ENCODE measurements at regions of chr10 and their contacts with region 1.

Region 1: DNA sequence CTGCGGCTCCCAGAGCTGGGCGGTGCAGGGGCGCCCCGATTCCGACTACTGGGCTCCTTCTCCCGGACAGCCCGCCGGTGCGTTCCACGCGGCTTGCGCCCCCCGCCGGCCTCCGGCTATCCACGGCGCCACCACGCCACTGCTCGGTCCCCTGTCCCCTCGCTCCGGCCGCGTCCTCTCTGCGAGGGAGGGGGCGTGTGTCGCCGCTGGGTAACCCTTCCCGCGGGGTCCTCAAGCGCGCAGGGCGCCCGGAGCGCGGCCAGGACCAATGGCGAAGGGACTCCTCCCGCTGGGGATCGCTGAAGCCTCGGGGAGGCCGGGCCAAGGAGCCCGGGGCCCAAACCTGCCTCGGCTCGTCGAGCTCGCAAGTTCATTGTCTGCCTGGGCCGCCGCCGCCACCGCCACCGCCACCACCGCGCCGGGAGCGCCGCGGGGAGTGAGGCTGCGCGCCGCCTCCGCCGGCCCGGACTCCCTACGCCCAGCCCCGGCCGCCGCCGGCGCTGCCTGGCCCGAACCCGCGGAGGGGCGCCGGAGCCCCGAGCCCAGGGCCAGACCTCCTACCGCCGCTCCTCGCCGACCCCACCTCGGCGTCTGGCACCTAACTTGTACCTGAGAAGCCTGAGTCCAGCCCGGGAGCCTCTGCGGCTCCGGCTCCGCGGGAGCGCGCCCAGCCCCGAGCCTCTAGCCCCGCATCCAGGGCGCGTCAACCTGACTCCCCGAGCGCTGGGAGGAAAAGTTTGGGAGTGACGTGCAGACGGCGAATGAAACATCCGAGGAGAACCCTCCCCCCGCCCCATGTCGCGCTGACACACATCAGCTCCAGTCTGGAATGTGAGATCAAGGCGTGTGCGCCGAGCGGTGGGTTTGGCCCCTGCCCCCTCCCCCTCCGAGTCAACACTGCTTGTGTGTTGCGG is at the start of gene CHST15:
- DNase-seq: peak; percentile 35 to 47
- ATAC-seq: peak; percentile 26 to 55 (median 46)
- H3K4me3 ChIP-seq: peak within 1 kb of the TSS; percentile 33 to 81 (median 68)
- H3K27ac ChIP-seq: peak within 1 kb of the TSS; percentile 56 to 97 (median 83)
- H3K4me1 ChIP-seq: peaks cover 0 to 52% (median 30%) of the 10 kb centered on the region in 9 donors
- H3K27me3 ChIP-seq: peaks cover 0 to 59% (median 35%) of the 10 kb centered on the region in 7 donors
- CTCF ChIP-seq: peak in 3 of 9 donors; percentile 27 to 36 (median 30)
- total RNA-seq, gene CHST15: 3.8 to 16.7 (median 5.1) TPM

Region 2: GRCh38 chr10:124035928-124036558 is 57.1 kb before region 1 on chr10:
- intact Hi-C with region 1: no loop called
- DNase-seq: peak in 1 of 2 donors; percentile 27
- ATAC-seq: peak in 7 of 8 donors; percentile 22 to 59 (median 33)
- H3K4me3 ChIP-seq: no peak overlapping the region
- H3K27ac ChIP-seq: peak overlapping the region in 1 of 10 donors; percentile 81
- H3K4me1 ChIP-seq: peaks cover 0 to 72% (median 8%) of the 10 kb centered on the region in 9 donors
- H3K27me3 ChIP-seq: no peaks in the 10 kb centered on the region
- CTCF ChIP-seq: no peak

Region 3: GRCh38 chr10:124152916-124153826 is 60.1 kb after region 1 on chr10:
- intact Hi-C with region 1: no loop called
- DNase-seq: peak; percentile 32 to 53
- ATAC-seq: peak; percentile 46 to 85 (median 64)
- H3K4me3 ChIP-seq: peak overlapping the region in 1 of 10 donors; percentile 20
- H3K27ac ChIP-seq: peak overlapping the region in 8 of 10 donors; percentile 25 to 85 (median 52)
- H3K4me1 ChIP-seq: peaks cover 19 to 73% (median 61%) of the 10 kb centered on the region in 9 donors
- H3K27me3 ChIP-seq: no peaks in the 10 kb centered on the region
- CTCF ChIP-seq: no peak

Region 4: DNA sequence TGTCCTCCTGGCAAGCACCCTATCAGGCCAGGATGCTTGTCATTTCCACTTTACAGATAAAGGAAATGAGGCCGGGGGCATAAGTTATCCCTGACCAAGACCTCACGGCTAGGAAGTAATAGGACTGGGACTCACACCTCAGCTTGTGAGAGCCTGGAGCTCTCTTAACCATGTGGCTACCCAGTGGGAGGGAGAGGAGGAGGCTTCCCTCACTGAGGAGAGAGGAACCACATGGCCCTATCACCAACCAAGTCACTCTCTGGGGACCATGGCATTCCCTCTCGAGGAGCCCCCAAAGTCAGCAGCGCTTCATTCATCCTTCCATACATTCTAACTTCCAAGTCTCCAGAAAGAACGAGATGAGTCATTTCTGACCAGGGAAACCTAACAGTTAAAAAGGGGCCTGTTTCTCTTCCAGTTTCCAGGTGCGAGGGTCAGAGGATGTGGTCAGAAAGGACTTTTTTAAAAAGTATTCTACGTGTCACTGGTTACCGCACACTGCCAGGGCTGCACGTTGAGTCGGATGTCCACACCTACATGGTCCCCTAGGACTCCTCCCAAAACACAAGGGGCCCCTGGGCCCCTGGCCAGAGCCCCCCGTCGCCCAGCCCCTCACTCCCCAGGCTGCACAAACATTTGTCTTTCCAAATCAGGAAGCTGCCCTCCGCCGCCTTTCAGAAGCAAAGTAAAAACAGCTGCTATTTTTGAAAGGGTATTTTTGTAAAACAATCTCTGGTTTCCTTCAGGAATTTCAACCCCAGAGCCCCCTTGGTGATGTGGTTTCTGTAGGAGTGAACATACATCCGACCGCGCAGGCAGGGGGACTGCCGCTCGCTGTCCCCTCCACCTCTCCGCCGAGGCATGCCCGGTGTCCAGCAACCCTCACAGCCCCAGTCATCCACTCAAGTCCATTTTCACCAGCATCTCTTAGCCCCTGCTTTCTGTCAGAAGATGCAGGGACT is 128.5 kb after region 1 on chr10:
- intact Hi-C with region 1: loop called in 1 of 10 experiments (anchors 10 kb)
- DNase-seq: peak in 1 of 2 donors; percentile 34
- ATAC-seq: peak; percentile 30 to 78 (median 68)
- H3K4me3 ChIP-seq: peak overlapping the region in 2 of 10 donors; percentile 10 to 48
- H3K27ac ChIP-seq: peak overlapping the region in 6 of 10 donors; percentile 19 to 78 (median 66)
- H3K4me1 ChIP-seq: peaks cover 0 to 30% (median 25%) of the 10 kb centered on the region in 9 donors
- H3K27me3 ChIP-seq: peaks cover 0 to 26% (median 0%) of the 10 kb centered on the region in 7 donors
- CTCF ChIP-seq: no peak

Measured in heart right ventricle (tissue), 16 donors.